Naive thymus-derived CD4-positive, alpha-beta T cell (primary cell): ENCODE measurements at regions of chr19 and their contacts with region 1.

Region 1: GRCh38 chr19:12938234-12939025 is at the start of gene CALR:
- DNase-seq: peak; percentile 93 to 100 (median 99)
- ATAC-seq: peak; percentile 94
- H3K4me3 ChIP-seq: peak within 1 kb of the TSS; percentile 90
- H3K4me3 Mint-ChIP-seq: peak within 1 kb of the TSS; percentile 90 to 99 (median 98)
- H3K27ac ChIP-seq: peak within 1 kb of the TSS; percentile 94
- H3K27ac Mint-ChIP-seq: peak within 1 kb of the TSS; percentile 93 to 98 (median 96)
- H3K4me1 ChIP-seq: peaks cover 37 to 41% of the 10 kb centered on the region in 2 donors
- H3K4me1 Mint-ChIP-seq: peaks cover 36 to 76% (median 57%) of the 10 kb centered on the region in 7 donors
- H3K27me3 ChIP-seq: no peaks in the 10 kb centered on the region
- H3K27me3 Mint-ChIP-seq: no peaks in the 10 kb centered on the region
- total RNA-seq, gene CALR: 449 to 1,130 (median 502) TPM

Region 2: DNA sequence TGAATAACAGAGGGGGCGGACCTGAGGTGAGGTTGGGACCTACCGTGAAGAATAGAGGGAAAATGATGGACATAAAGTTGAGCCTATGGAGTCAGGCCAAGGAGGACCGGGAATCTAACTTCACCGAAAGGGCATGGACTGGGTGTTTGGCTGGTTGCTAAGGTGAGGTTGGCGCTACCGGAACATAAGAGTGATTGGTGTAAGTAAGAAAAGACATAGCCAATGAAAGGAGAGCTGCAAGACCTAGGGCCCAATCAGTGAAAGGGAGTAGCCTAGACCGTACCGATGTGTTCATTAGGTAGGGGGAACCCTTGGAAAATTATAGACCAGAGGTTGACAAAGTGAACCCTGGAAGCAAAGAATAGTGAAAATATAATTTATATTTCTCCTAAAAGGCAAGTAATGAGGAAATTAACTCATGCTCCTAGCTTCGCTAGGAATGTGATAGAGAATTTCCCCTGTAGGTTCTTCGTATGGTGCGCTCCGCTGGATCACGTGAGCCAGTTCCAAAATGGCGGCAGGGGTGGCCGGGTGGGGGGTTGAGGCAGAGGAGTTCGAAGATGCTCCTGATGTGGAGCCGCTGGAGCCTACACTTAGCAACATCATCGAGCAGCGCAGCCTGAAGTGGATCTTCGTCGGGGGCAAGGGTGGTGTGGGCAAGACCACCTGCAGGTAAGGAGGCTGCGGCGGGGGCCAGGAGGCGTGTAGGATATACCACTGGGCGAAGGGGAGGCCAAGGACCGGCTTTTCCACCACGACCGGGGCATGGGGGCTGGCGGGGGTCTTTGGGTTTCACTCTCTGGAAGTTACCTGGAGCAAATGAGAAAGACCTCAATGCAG is 201.2 kb before region 1 on chr19 and contains the start of gene GET3:
- CTCF ChIA-PET with region 1: no interaction called
- POLR2A ChIA-PET with region 1: no interaction called
- intact Hi-C with region 1: loop called (anchors 1 kb)
- DNase-seq: peak; percentile 53 to 92 (median 86)
- ATAC-seq: peak; percentile 85
- H3K4me3 ChIP-seq: peak within 1 kb of the TSS; percentile 76
- H3K4me3 Mint-ChIP-seq: peak within 1 kb of the TSS; percentile 96 to 100 (median 99)
- H3K27ac ChIP-seq: peak within 1 kb of the TSS; percentile 93
- H3K27ac Mint-ChIP-seq: peak within 1 kb of the TSS; percentile 90 to 99 (median 97)
- H3K4me1 ChIP-seq: peaks cover 27 to 30% of the 10 kb centered on the region in 2 donors
- H3K4me1 Mint-ChIP-seq: peaks cover 29 to 42% (median 38%) of the 10 kb centered on the region in 7 donors
- H3K27me3 ChIP-seq: no peaks in the 10 kb centered on the region
- H3K27me3 Mint-ChIP-seq: no peaks in the 10 kb centered on the region
- total RNA-seq, gene GET3: 22.6 to 60.3 (median 27.0) TPM

Region 3: GRCh38 chr19:12748489-12748888 is 189.9 kb before region 1 on chr19:
- CTCF ChIA-PET with region 1: no interaction called
- POLR2A ChIA-PET with region 1: no interaction called
- intact Hi-C with region 1: no loop called
- DNase-seq: no peak
- ATAC-seq: no peak
- H3K4me3 ChIP-seq: no peak overlapping the region
- H3K4me3 Mint-ChIP-seq: no peak overlapping the region
- H3K27ac ChIP-seq: no peak overlapping the region
- H3K27ac Mint-ChIP-seq: no peak overlapping the region
- H3K4me1 ChIP-seq: no peaks in the 10 kb centered on the region
- H3K4me1 Mint-ChIP-seq: peaks cover 0 to 13% (median 4%) of the 10 kb centered on the region in 7 donors
- H3K27me3 ChIP-seq: no peaks in the 10 kb centered on the region
- H3K27me3 Mint-ChIP-seq: peaks cover 9 to 29% (median 18%) of the 10 kb centered on the region in 5 donors

Region 4: GRCh38 chr19:12806239-12807081 is 132.0 kb before region 1 on chr19 and contains the start of gene RNASEH2A:
- CTCF ChIA-PET with region 1: no interaction called
- POLR2A ChIA-PET with region 1: no interaction called
- intact Hi-C with region 1: loop called in 1 of 2 experiments (anchors 1 kb)
- DNase-seq: peak; percentile 74 to 87 (median 84)
- ATAC-seq: peak; percentile 95
- H3K4me3 ChIP-seq: peak within 1 kb of the TSS; percentile 73
- H3K4me3 Mint-ChIP-seq: peak within 1 kb of the TSS; percentile 81 to 96 (median 91)
- H3K27ac ChIP-seq: peak within 1 kb of the TSS; percentile 70
- H3K27ac Mint-ChIP-seq: peak within 1 kb of the TSS; percentile 71 to 94 (median 89)
- H3K4me1 ChIP-seq: peaks cover 18% of the 10 kb centered on the region in 2 donors
- H3K4me1 Mint-ChIP-seq: peaks cover 15 to 26% (median 21%) of the 10 kb centered on the region in 7 donors
- H3K27me3 ChIP-seq: no peaks in the 10 kb centered on the region
- H3K27me3 Mint-ChIP-seq: peaks cover 0 to 6% (median 0%) of the 10 kb centered on the region in 5 donors
- total RNA-seq, gene RNASEH2A: 1.6 to 30.9 (median 9.3) TPM

Region 5: GRCh38 chr19:12890787-12891552 is 47.5 kb before region 1 on chr19 and contains the start of gene GCDH:
- CTCF ChIA-PET with region 1: interaction called, 6 read pairs
- POLR2A ChIA-PET with region 1: interaction called, 21 read pairs
- intact Hi-C with region 1: loop called (anchors 1 kb)
- DNase-seq: peak; percentile 77 to 98 (median 96)
- ATAC-seq: peak; percentile 97
- H3K4me3 ChIP-seq: peak within 1 kb of the TSS; percentile 87
- H3K4me3 Mint-ChIP-seq: peak within 1 kb of the TSS; percentile 91 to 100 (median 99)
- H3K27ac ChIP-seq: peak within 1 kb of the TSS; percentile 83
- H3K27ac Mint-ChIP-seq: peak within 1 kb of the TSS; percentile 94 to 99 (median 98)
- H3K4me1 ChIP-seq: peaks cover 5 to 15% of the 10 kb centered on the region in 2 donors
- H3K4me1 Mint-ChIP-seq: peaks cover 16 to 41% (median 30%) of the 10 kb centered on the region in 7 donors
- H3K27me3 ChIP-seq: no peaks in the 10 kb centered on the region
- H3K27me3 Mint-ChIP-seq: peaks cover 0 to 6% (median 0%) of the 10 kb centered on the region in 5 donors
- total RNA-seq, gene GCDH: 40.1 to 74.2 (median 54.5) TPM

Region 6: DNA sequence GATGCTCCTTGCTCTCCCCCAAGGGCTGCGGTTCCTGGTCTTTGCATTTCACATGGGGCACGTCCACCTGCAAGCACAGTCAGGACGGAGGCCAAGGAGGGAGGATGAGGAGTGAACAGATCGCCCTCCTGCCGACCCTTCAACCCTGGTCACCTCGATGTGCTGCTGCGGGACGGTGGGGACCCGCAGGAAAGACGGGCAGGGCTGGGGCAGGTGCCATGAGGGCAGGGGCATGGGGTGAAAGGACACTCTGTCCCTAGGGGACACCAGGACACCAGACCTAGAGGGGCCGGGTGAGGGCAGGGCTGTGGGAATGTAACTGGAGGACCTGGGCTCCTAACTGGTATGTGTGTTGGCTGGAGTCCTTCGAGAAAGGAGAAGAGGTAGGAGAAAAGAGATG is 20.2 kb before region 1 on chr19:
- CTCF ChIA-PET with region 1: interaction called, 5 read pairs
- POLR2A ChIA-PET with region 1: interaction called, 34 read pairs
- intact Hi-C with region 1: loop called (anchors 1 kb)
- DNase-seq: no peak
- ATAC-seq: no peak
- H3K4me3 ChIP-seq: no peak overlapping the region
- H3K4me3 Mint-ChIP-seq: peak overlapping the region in 9 of 10 donors; percentile 23 to 87 (median 76)
- H3K27ac ChIP-seq: no peak overlapping the region
- H3K27ac Mint-ChIP-seq: peak overlapping the region in 6 of 9 donors; percentile 48 to 96 (median 91)
- H3K4me1 ChIP-seq: peaks cover 12 to 27% of the 10 kb centered on the region in 2 donors
- H3K4me1 Mint-ChIP-seq: peaks cover 9 to 51% (median 34%) of the 10 kb centered on the region in 7 donors
- H3K27me3 ChIP-seq: no peaks in the 10 kb centered on the region
- H3K27me3 Mint-ChIP-seq: no peaks in the 10 kb centered on the region

Region 7: GRCh38 chr19:12965017-12965811 is 26.8 kb after region 1 on chr19:
- CTCF ChIA-PET with region 1: interaction called, 7 read pairs
- POLR2A ChIA-PET with region 1: interaction called, 4 read pairs
- intact Hi-C with region 1: loop called in 1 of 2 experiments (anchors 1 kb)
- DNase-seq: peak; percentile 57 to 91 (median 78)
- ATAC-seq: peak; percentile 98
- H3K4me3 ChIP-seq: peak overlapping the region; percentile 87
- H3K4me3 Mint-ChIP-seq: peak overlapping the region; percentile 78 to 92 (median 88)
- H3K27ac ChIP-seq: peak overlapping the region; percentile 21
- H3K27ac Mint-ChIP-seq: peak overlapping the region in 8 of 9 donors; percentile 10 to 86 (median 54)
- H3K4me1 ChIP-seq: peaks cover 3 to 9% of the 10 kb centered on the region in 2 donors
- H3K4me1 Mint-ChIP-seq: peaks cover 5 to 11% (median 7%) of the 10 kb centered on the region in 7 donors
- H3K27me3 ChIP-seq: no peaks in the 10 kb centered on the region
- H3K27me3 Mint-ChIP-seq: no peaks in the 10 kb centered on the region